ENCODE measurements at regions of chr15 and their contacts with region 1.

Region 1: DNA sequence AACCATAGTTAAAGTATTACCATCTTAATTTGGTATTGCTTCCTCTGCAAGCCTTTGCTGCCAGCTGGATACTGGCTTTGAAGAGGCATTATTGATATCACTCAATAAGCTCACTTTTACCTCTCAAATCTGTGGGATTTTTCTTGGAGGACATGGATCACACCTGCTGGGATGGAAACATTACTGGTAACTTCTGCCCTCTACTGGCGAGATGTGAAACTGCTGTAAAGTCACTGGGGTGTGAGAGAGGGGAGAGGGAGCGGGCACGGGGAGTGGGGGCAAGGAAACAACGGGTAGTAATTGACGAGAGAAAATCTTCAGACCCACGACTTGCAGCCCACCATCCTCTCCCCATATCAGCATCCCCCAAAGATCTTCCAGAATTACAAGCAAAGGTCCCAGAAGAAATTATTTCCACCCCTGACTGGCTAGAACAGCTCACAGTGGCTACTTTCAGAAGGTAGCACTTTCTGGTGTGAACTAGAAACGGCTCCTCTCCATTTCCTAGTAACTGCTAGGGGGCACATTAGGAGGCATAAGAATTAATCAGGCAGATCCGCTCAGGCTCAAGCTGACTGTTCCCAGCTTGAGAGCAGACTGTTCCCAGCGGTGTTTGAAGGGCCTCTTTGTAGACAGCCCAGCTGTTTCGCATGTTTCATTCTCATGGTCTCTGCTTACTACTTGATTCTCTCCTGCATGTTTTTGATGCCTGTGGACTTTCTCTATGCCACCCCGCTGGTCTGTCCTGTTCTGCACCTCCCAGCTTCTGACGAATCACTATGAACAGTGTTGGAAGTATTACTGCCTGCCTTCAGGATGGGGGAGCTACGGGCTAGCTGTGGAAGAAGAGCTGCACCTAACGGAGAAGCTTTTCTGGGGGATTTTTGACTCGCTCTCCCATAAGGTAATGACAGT is 230.4 kb upstream of the CHRM5 start:
- DNase-seq: no peak
- ATAC-seq: peak in 2 of 4 donors; percentile 49 to 65
- H3K4me3 ChIP-seq: no peak overlapping the region
- H3K27ac ChIP-seq: no peak overlapping the region
- H3K4me1 ChIP-seq: no peaks in the 10 kb centered on the region
- H3K27me3 ChIP-seq: peaks cover 0 to 4% (median 0%) of the 10 kb centered on the region in 9 donors
- CTCF ChIP-seq: peak; percentile 53 to 74 (median 65)
- POLR2A ChIP-seq: no peak

Region 2: DNA sequence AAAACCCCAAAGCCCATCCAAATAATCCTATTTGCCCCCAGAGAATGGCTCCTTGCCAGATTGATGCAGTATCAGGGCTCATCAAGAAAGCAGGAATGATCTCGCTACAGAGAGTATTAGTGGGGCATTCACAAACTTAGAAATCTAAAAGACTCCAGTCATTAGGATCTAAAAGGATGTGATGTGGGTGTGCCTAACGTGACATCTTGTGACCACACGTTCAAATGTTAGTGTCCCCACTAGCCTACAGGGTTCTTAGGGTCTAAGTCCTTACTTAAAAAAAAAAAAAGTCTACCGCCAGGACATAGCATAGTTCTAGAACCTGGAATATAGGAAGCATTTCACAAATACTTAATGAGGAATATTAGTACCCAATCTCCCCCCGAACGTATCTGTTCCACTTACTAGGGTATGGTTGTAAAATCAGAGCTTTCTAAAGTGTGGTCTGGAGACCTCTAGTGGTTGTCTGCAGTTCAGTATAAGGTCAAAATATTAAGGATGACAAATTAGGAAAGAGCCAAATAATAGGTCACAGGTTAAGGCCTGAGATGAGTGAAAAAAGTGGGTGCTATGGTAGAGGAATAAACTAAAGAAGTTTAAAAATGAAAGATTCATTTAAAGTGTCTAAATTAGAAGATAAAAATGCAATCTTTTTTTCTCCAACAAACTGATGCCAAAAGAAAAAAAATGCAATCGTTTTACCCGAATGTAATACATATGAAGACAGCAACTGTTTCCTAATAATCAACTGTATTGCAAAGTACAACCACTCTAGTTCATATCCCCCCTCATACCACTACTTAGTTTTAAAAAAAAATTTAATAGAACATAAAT is 226.1 kb after region 1 on chr15:
- intact Hi-C with region 1: loop called (anchors 5 to 10 kb)
- DNase-seq: no peak
- ATAC-seq: no peak
- H3K4me3 ChIP-seq: no peak overlapping the region
- H3K27ac ChIP-seq: no peak overlapping the region
- H3K4me1 ChIP-seq: peaks cover 0 to 6% (median 0%) of the 10 kb centered on the region in 12 donors
- H3K27me3 ChIP-seq: no peaks in the 10 kb centered on the region
- CTCF ChIP-seq: peak; percentile 34 to 68 (median 50)
- POLR2A ChIP-seq: no peak

Measured in heart left ventricle (tissue), 16 donors.